AG04450 (cell line): ENCODE measurements at regions of chr1 and their contacts with region 1.

Region 1: DNA sequence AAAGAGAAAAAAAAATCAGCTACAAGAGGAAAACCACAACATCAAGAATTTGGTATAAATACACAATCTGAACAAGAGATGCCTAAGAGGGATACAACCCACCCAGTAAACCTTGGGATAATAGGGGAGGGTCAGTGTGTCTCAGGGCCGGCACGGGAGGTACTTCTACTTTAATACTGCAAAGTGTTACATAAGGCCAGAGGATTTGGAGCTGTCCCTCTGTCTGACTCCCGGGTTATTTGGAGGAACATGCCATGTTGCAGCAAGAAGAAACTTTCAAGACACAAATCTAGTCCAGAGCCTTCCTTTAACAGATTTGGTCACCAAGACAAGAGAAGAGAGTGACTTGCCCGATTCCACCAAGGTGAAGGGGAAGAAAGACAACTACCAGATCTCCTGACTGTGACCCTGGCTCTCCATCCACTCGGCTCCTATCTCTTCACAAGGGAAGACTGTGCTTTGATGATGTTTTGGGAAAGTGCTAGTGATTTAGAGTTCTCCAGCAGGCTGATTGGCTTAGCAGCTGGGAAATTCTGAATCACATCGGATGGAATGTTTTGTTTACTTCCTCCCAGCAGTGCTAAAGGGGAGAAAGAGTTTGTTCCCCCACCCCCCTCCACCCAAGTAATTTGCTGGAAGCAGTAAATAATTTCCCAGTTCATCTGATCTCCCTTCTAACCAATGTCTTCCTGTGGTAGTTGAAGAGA is 29.3 kb downstream of the SGIP1 start:
- DNase-seq: peak; percentile 91
- H3K4me3 ChIP-seq: peak overlapping the region; percentile 42
- H3K27ac ChIP-seq: peak overlapping the region; percentile 94
- H3K27me3 ChIP-seq: no peaks in the 10 kb centered on the region
- CTCF ChIP-seq: no peak

Region 2: DNA sequence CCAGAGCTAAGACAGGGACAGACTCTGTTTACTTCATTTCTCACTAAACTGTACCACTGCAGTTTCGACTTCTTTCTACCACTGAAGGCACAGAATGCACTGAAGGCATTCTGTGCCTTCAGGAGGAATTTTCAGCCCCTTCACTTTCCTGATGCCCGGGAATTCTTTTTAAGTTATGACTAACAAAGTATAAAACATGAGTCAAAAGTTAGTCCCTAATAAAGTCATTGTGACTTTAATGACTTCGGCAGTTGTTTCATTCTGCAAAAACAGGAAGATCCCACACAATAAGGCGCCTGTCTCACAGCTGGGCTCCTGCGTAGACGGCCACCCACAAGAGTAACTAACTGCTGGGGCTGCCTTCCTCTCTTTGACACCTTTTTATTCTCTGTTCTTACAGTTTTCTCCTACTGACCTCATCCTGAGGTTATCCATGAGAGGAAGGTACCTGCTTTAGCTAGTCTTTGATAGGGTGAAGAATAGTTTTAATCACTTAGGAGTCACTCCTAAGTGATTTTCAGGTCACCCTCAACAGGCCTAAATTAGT is 213.2 kb before region 1 on chr1:
- CTCF ChIA-PET with region 1: no interaction called
- POLR2A ChIA-PET with region 1: no interaction called
- DNase-seq: no peak
- H3K4me3 ChIP-seq: no peak overlapping the region
- H3K27ac ChIP-seq: peak overlapping the region; percentile 25
- H3K27me3 ChIP-seq: no peaks in the 10 kb centered on the region
- CTCF ChIP-seq: no peak

Region 3: GRCh38 chr1:66364578-66365391 is 198.5 kb before region 1 on chr1:
- CTCF ChIA-PET with region 1: no interaction called
- POLR2A ChIA-PET with region 1: no interaction called
- DNase-seq: no peak
- H3K4me3 ChIP-seq: no peak overlapping the region
- H3K27ac ChIP-seq: no peak overlapping the region
- H3K27me3 ChIP-seq: no peaks in the 10 kb centered on the region
- CTCF ChIP-seq: no peak

Region 4: GRCh38 chr1:66552829-66553228 is 10.4 kb before region 1 on chr1:
- CTCF ChIA-PET with region 1: no interaction called
- POLR2A ChIA-PET with region 1: interaction called, 10 read pairs
- DNase-seq: no peak
- H3K4me3 ChIP-seq: no peak overlapping the region
- H3K27ac ChIP-seq: no peak overlapping the region
- H3K27me3 ChIP-seq: no peaks in the 10 kb centered on the region
- CTCF ChIP-seq: no peak